ENCODE measurements at regions of chr20 and their contacts with region 1.

Region 1: DNA sequence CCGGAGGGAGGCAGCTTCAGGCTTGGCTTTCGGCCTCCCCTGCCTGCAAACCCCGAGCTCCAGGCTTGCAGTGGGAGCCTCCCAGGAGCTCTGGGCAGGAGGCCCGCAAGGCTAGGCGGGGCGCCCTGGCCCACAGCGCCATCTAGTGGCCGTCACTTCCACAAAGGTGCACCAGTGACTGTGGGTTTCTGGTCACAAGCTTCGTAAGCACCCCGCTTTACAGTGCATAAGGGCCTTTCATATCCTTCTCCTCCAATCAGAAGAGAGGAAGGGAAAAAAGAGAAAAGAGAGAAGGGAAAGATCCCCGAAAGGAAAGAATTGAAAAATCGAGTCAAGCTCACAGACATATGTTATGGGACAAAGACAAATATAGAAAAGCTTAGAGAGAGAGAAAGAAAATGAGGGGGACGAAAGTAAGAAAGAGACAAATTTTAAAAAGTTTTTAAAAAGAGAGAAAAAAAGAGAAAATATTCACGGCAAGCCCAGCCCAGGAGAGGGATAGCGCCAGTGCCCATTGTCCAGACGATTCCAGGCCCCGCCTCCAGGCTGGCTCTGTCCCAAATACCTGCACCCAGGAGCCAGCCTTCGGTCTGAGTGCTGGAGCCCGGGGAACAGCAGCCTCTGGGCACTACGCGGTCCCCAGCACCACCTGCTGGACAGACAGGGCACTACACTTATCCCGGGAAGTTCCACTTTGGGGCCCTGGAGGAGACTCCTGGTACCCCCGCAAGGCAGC is 207.1 kb downstream of the PREX1 start:
- DNase-seq: peak; percentile 36
- ATAC-seq: peak; percentile 95
- H3K4me3 ChIP-seq: no peak overlapping the region
- H3K27ac ChIP-seq: no peak overlapping the region
- H3K4me1 ChIP-seq: peaks cover 3% of the 10 kb centered on the region; the same call in 1 of the 2 replicates
- H3K27me3 ChIP-seq: no peaks in the 10 kb centered on the region
- CTCF ChIP-seq: peak; percentile 88 to 98 (median 97)
- EP300 ChIP-seq: no peak
- POLR2A ChIP-seq: no peak
- RAD21 ChIP-seq: peak; percentile 98

Region 2: GRCh38 chr20:47677635-47678453 is 942.8 kb before region 1 on chr20:
- CTCF ChIA-PET with region 1: interaction called, 31 read pairs
- POLR2A ChIA-PET with region 1: no interaction called
- RAD21 ChIA-PET with region 1: interaction called, 25 read pairs
- SMC1A ChIA-PET with region 1: interaction called, 25 read pairs
- in situ Hi-C with region 1: loop called (anchors 5 kb)
- intact Hi-C with region 1: loop called (anchors 2 kb)
- DNase-seq: no peak
- ATAC-seq: peak; percentile 84
- H3K4me3 ChIP-seq: no peak overlapping the region
- H3K27ac ChIP-seq: no peak overlapping the region
- H3K4me1 ChIP-seq: no peaks in the 10 kb centered on the region
- H3K27me3 ChIP-seq: no peaks in the 10 kb centered on the region; a peak in 1 of 4 replicates
- CTCF ChIP-seq: peak; percentile 80 to 90 (median 83)
- EP300 ChIP-seq: no peak
- POLR2A ChIP-seq: no peak
- RAD21 ChIP-seq: peak; percentile 77

Region 3: DNA sequence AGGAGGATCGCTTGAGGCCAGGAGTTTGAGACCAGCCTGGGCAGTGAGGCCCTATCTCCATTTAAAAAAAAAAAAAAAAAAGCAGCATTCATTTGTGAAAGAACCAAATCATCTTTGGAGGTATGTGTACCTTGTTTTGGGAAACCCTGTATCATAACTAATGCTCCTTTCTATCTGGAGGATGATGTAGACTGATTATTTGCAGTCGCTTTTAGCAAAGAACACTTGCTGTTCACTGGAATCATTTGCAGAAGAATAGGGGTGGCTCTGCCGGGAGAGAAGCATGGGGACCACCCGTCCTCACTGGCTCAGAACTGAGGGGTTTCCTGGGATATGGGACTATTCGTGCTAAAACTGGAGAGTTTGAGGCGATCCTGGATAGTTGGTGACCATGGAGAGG is 766.5 kb before region 1 on chr20:
- CTCF ChIA-PET with region 1: interaction called, 9 read pairs
- POLR2A ChIA-PET with region 1: no interaction called
- RAD21 ChIA-PET with region 1: interaction called, 14 read pairs
- SMC1A ChIA-PET with region 1: interaction called, 11 read pairs
- in situ Hi-C with region 1: no loop called
- intact Hi-C with region 1: no loop called
- DNase-seq: no peak
- ATAC-seq: no peak
- H3K4me3 ChIP-seq: no peak overlapping the region
- H3K27ac ChIP-seq: no peak overlapping the region
- H3K4me1 ChIP-seq: peaks cover 9% of the 10 kb centered on the region
- H3K27me3 ChIP-seq: no peaks in the 10 kb centered on the region; a peak in 1 of 4 replicates
- CTCF ChIP-seq: no peak
- EP300 ChIP-seq: no peak
- POLR2A ChIP-seq: no peak
- RAD21 ChIP-seq: no peak

Region 4: DNA sequence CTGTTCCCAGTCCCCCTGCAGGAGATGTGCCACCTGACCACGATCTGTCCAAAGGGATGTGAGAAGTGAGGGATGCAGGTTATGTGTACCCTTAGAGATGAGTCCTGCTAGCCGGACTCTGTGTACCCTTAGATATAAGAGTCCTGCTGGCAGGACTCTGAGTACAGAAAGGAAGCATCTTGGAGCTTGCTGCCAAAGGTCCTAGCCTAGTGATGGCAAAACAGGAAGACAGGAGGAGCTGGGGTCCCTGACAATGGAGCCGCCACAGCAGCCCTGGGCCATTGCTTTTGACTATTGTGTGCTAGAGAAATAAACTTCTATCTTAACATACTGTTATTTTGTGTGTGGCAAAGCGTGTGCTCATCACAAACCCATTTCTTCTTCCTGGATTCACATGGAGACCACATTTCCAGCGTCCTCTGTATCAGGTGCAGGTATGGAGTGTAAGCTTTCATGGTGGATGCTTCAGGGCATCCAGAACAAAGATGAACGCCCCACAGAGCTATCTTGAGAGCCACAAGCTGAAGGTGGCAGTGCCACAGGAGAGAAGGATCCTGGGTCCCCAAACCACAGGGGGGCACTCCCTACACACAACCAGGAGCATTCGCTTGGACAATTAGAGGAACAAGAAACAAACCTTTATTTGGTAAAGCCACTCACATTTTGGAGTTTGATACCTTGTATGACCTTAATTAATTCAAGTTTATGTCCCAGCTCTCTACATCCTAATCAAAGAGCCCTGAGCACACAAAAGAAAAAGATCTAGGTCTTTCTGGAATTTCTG is 199.3 kb before region 1 on chr20:
- CTCF ChIA-PET with region 1: interaction called, 17 read pairs
- POLR2A ChIA-PET with region 1: no interaction called
- RAD21 ChIA-PET with region 1: interaction called, 28 read pairs
- SMC1A ChIA-PET with region 1: interaction called, 8 read pairs
- in situ Hi-C with region 1: no loop called
- intact Hi-C with region 1: loop called (anchors 5 kb)
- DNase-seq: no peak
- ATAC-seq: no peak
- H3K4me3 ChIP-seq: no peak overlapping the region
- H3K27ac ChIP-seq: no peak overlapping the region
- H3K4me1 ChIP-seq: peaks cover 3% of the 10 kb centered on the region; the same call in 1 of the 2 replicates
- H3K27me3 ChIP-seq: no peaks in the 10 kb centered on the region
- CTCF ChIP-seq: peak in 1 of 3 experiments; percentile 23; a peak in 1 of 6 replicates
- EP300 ChIP-seq: no peak
- POLR2A ChIP-seq: no peak
- RAD21 ChIP-seq: peak; percentile 50

Region 5: DNA sequence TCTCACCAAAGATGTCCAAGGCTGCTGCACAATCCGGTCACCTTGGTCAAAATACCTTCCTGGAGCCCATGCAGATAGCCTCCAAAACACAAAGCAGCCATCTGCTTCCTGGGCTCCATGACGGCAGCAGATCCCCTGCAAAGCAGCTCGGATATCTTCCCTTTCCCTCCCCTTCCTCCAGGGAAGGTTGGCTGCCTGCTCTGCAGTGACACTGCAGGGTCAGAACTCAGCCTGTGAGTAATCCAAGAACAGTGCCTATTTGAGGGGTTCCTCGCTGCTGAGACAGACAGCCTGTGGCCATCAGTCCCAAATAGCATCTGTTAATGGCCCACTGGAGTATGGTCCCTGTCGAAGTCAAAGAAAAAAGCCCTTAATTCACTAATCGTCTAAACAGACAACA is 63.7 kb before region 1 on chr20:
- CTCF ChIA-PET with region 1: interaction called, 16 read pairs
- POLR2A ChIA-PET with region 1: no interaction called
- RAD21 ChIA-PET with region 1: interaction called, 12 read pairs
- SMC1A ChIA-PET with region 1: interaction called, 4 read pairs
- in situ Hi-C with region 1: no loop called
- intact Hi-C with region 1: loop called (anchors 2 kb)
- DNase-seq: no peak
- ATAC-seq: no peak
- H3K4me3 ChIP-seq: no peak overlapping the region
- H3K27ac ChIP-seq: no peak overlapping the region
- H3K4me1 ChIP-seq: no peaks in the 10 kb centered on the region
- H3K27me3 ChIP-seq: peaks cover 0 to 3% of the 10 kb centered on the region in 2 experiments; a peak in 2 of 4 replicates
- CTCF ChIP-seq: no peak
- EP300 ChIP-seq: no peak
- POLR2A ChIP-seq: no peak
- RAD21 ChIP-seq: no peak

Region 6: GRCh38 chr20:48609491-48609978 is 11.2 kb before region 1 on chr20:
- CTCF ChIA-PET with region 1: interaction called, 26 read pairs
- POLR2A ChIA-PET with region 1: no interaction called
- RAD21 ChIA-PET with region 1: interaction called, 23 read pairs
- SMC1A ChIA-PET with region 1: interaction called, 14 read pairs
- in situ Hi-C with region 1: no loop called
- intact Hi-C with region 1: no loop called
- DNase-seq: peak; percentile 62
- ATAC-seq: peak; percentile 100
- H3K4me3 ChIP-seq: no peak overlapping the region
- H3K27ac ChIP-seq: peak overlapping the region; percentile 47; the same call in 1 of the 2 replicates
- H3K4me1 ChIP-seq: peaks cover 18% of the 10 kb centered on the region
- H3K27me3 ChIP-seq: no peaks in the 10 kb centered on the region
- CTCF ChIP-seq: no peak
- EP300 ChIP-seq: peak; percentile 69 to 77; a peak in 3 of 4 replicates
- POLR2A ChIP-seq: no peak
- RAD21 ChIP-seq: no peak

Region 7: GRCh38 chr20:48682529-48683251 is 62.0 kb after region 1 on chr20:
- CTCF ChIA-PET with region 1: no interaction called
- POLR2A ChIA-PET with region 1: no interaction called
- RAD21 ChIA-PET with region 1: no interaction called
- SMC1A ChIA-PET with region 1: no interaction called
- in situ Hi-C with region 1: no loop called
- intact Hi-C with region 1: no loop called
- DNase-seq: no peak
- ATAC-seq: no peak
- H3K4me3 ChIP-seq: no peak overlapping the region
- H3K27ac ChIP-seq: no peak overlapping the region
- H3K4me1 ChIP-seq: no peaks in the 10 kb centered on the region
- H3K27me3 ChIP-seq: no peaks in the 10 kb centered on the region
- CTCF ChIP-seq: no peak
- EP300 ChIP-seq: no peak
- POLR2A ChIP-seq: 0 out of 2 replicates have a peak, but pooled peaks have one; percentile 15
- RAD21 ChIP-seq: no peak

Measured in GM12878 (cell line).